ENCODE measurements at regions of chr2 and their contacts with region 1.

Region 1: GRCh38 chr2:26144953-26145680 is 27.8 kb upstream of the GAREM2 start:
- DNase-seq: peak; percentile 34 to 75 (median 61)
- ATAC-seq: peak; percentile 79
- H3K4me3 ChIP-seq: no peak overlapping the region
- H3K4me3 Mint-ChIP-seq: no peak overlapping the region
- H3K27ac ChIP-seq: no peak overlapping the region
- H3K27ac Mint-ChIP-seq: no peak overlapping the region
- H3K4me1 ChIP-seq: no peaks in the 10 kb centered on the region
- H3K4me1 Mint-ChIP-seq: no peaks in the 10 kb centered on the region
- H3K27me3 ChIP-seq: peaks cover 0 to 3% of the 10 kb centered on the region in 2 experiments
- H3K27me3 Mint-ChIP-seq: peaks cover 9% of the 10 kb centered on the region
- CTCF ChIP-seq: peak; percentile 65

Region 2: GRCh38 chr2:25606892-25607291 is 538.2 kb before region 1 on chr2:
- CTCF ChIA-PET with region 1: no interaction called
- POLR2A ChIA-PET with region 1: no interaction called
- intact Hi-C with region 1: loop called (anchors 1 to 2 kb)
- DNase-seq: peak in 3 of 9 experiments; percentile 8 to 60 (median 39)
- ATAC-seq: peak; percentile 55
- H3K4me3 ChIP-seq: no peak overlapping the region
- H3K4me3 Mint-ChIP-seq: no peak overlapping the region
- H3K27ac ChIP-seq: no peak overlapping the region
- H3K27ac Mint-ChIP-seq: no peak overlapping the region
- H3K4me1 ChIP-seq: no peaks in the 10 kb centered on the region
- H3K4me1 Mint-ChIP-seq: peaks cover 2% of the 10 kb centered on the region
- H3K27me3 ChIP-seq: no peaks in the 10 kb centered on the region
- H3K27me3 Mint-ChIP-seq: no peaks in the 10 kb centered on the region
- CTCF ChIP-seq: peak; percentile 72

Region 3: GRCh38 chr2:25951071-25951547 is 194.0 kb before region 1 on chr2:
- CTCF ChIA-PET with region 1: interaction called, 25 read pairs
- POLR2A ChIA-PET with region 1: no interaction called
- intact Hi-C with region 1: loop called in 1 of 2 experiments (anchors 1 kb)
- DNase-seq: peak; percentile 42 to 84 (median 67)
- ATAC-seq: peak; percentile 96
- H3K4me3 ChIP-seq: no peak overlapping the region
- H3K4me3 Mint-ChIP-seq: no peak overlapping the region
- H3K27ac ChIP-seq: no peak overlapping the region
- H3K27ac Mint-ChIP-seq: no peak overlapping the region
- H3K4me1 ChIP-seq: no peaks in the 10 kb centered on the region
- H3K4me1 Mint-ChIP-seq: peaks cover 2% of the 10 kb centered on the region
- H3K27me3 ChIP-seq: no peaks in the 10 kb centered on the region
- H3K27me3 Mint-ChIP-seq: no peaks in the 10 kb centered on the region
- CTCF ChIP-seq: peak; percentile 89

Region 4: GRCh38 chr2:25991965-25992364 is 153.2 kb before region 1 on chr2:
- CTCF ChIA-PET with region 1: interaction called, 54 read pairs
- POLR2A ChIA-PET with region 1: no interaction called
- intact Hi-C with region 1: loop called (anchors 1 kb)
- DNase-seq: no peak
- ATAC-seq: no peak
- H3K4me3 ChIP-seq: no peak overlapping the region
- H3K4me3 Mint-ChIP-seq: peak overlapping the region; percentile 79
- H3K27ac ChIP-seq: no peak overlapping the region
- H3K27ac Mint-ChIP-seq: no peak overlapping the region
- H3K4me1 ChIP-seq: no peaks in the 10 kb centered on the region
- H3K4me1 Mint-ChIP-seq: peaks cover 6% of the 10 kb centered on the region
- H3K27me3 ChIP-seq: peaks cover 0 to 2% of the 10 kb centered on the region in 2 experiments
- H3K27me3 Mint-ChIP-seq: no peaks in the 10 kb centered on the region
- CTCF ChIP-seq: no peak

Region 5: GRCh38 chr2:26088032-26088643 is 57.0 kb before region 1 on chr2:
- CTCF ChIA-PET with region 1: interaction called, 6 read pairs
- POLR2A ChIA-PET with region 1: no interaction called
- intact Hi-C with region 1: loop called (anchors 1 to 5 kb)
- DNase-seq: peak in 4 of 9 experiments; percentile 9 to 61 (median 32)
- ATAC-seq: peak; percentile 69
- H3K4me3 ChIP-seq: no peak overlapping the region
- H3K4me3 Mint-ChIP-seq: no peak overlapping the region
- H3K27ac ChIP-seq: no peak overlapping the region
- H3K27ac Mint-ChIP-seq: no peak overlapping the region
- H3K4me1 ChIP-seq: peaks cover 4% of the 10 kb centered on the region
- H3K4me1 Mint-ChIP-seq: peaks cover 61% of the 10 kb centered on the region
- H3K27me3 ChIP-seq: no peaks in the 10 kb centered on the region
- H3K27me3 Mint-ChIP-seq: no peaks in the 10 kb centered on the region
- CTCF ChIP-seq: peak; percentile 69

Region 6: DNA sequence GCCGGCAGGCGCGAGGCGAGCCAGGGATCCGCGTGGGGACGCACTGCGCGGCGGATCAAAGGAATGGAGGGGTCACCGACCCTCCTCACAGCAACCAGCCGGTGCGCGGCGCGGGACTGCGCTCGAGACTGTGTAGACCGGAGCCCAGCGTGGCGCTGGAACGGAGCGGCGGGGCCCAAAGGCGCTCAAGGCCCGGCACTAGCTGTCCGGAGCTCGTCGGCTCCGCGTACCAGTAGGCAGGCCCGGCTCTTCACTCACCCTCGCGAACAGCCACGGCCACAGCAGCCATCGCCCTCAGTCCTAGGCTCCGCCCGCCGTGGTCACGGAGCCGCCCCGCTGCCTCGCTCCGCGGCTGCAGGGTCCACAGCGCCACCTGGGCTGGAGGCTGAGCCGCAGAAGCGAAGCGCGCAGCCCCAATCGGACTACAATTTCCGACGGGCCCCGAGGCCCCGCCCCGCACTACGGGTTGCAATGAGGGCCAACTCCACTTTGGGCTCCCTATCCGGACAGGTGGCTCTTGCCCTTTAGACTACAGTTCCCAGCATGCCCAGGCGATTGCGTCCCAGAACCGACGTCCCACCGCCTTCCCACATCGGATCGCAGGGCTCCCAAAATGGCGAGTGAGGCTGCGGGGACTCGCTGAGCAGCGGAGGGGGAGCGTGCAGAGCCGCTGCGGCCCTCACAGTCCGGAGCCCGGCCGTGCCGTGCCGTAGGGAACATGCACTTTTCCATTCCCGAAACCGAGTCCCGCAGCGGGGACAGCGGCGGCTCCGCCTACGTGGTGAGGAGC is 1225.1 kb after region 1 on chr2 and contains the starts of genes EIF2B4 and SNX17:
- CTCF ChIA-PET with region 1: no interaction called
- POLR2A ChIA-PET with region 1: no interaction called
- intact Hi-C with region 1: no loop called
- DNase-seq: peak; percentile 98 to 100 (median 99)
- ATAC-seq: peak; percentile 91
- H3K4me3 ChIP-seq: peak within 1 kb of the TSS; percentile 88 to 94
- H3K4me3 Mint-ChIP-seq: peak within 1 kb of the TSS; percentile 96
- H3K27ac ChIP-seq: peak within 1 kb of the TSS; percentile 76 to 88
- H3K27ac Mint-ChIP-seq: peak within 1 kb of the TSS; percentile 97
- H3K4me1 ChIP-seq: peaks cover 35% of the 10 kb centered on the region
- H3K4me1 Mint-ChIP-seq: peaks cover 36% of the 10 kb centered on the region
- H3K27me3 ChIP-seq: no peaks in the 10 kb centered on the region
- H3K27me3 Mint-ChIP-seq: no peaks in the 10 kb centered on the region
- CTCF ChIP-seq: peak; percentile 64
- total RNA-seq, gene EIF2B4: 39.7 to 39.9 TPM
- total RNA-seq, gene SNX17: 64.8 to 66.5 TPM